ENCODE measurements at regions of chr5 and their contacts with region 1.

Region 1: GRCh38 chr5:39355324-39355723 is 9.0 kb downstream of the C9 start:
- DNase-seq: no peak
- ATAC-seq: no peak
- H3K4me3 ChIP-seq: no peak overlapping the region
- H3K27ac ChIP-seq: no peak overlapping the region
- H3K4me1 ChIP-seq: no peaks in the 10 kb centered on the region
- H3K27me3 ChIP-seq: no peaks in the 10 kb centered on the region
- CTCF ChIP-seq: no peak

Region 2: DNA sequence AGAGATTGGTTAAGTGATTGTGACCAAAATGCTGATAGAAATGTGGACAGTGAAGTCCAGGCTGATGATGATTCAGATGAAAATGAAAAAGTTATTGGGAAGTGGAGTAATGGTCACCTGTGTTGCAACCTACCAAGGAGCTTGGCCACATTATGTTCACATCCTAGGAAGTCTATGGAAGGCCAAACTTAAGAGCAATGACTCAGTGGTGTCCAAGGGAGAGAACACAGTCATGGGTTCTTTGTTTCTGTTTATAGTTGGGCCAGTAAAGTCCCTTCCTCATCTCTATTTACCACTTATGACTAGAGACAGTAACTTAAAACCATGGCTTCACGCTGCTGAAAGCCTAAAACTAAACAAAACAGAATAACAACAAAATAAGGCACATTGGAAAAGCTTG is 624.7 kb after region 1 on chr5:
- intact Hi-C with region 1: loop called in 1 of 2 experiments (anchors 5 kb)
- DNase-seq: no peak
- ATAC-seq: no peak
- H3K4me3 ChIP-seq: no peak overlapping the region
- H3K27ac ChIP-seq: no peak overlapping the region
- H3K4me1 ChIP-seq: no peaks in the 10 kb centered on the region
- H3K27me3 ChIP-seq: no peaks in the 10 kb centered on the region
- CTCF ChIP-seq: no peak